Ascending aorta (tissue), 2 donors: ENCODE measurements at regions of chr2 and their contacts with region 1.

Region 1: GRCh38 chr2:30146438-30147147 is at the start of gene YPEL5:
- DNase-seq: peak; percentile 99 to 100
- H3K4me3 ChIP-seq: peak within 1 kb of the TSS; percentile 98 to 100
- H3K27ac ChIP-seq: peak within 1 kb of the TSS; percentile 97 to 100
- H3K4me1 ChIP-seq: peaks cover 5 to 22% of the 10 kb centered on the region in 2 donors
- H3K27me3 ChIP-seq: no peaks in the 10 kb centered on the region
- CTCF ChIP-seq: no peak
- total RNA-seq, gene YPEL5: 14.2 TPM

Region 2: DNA sequence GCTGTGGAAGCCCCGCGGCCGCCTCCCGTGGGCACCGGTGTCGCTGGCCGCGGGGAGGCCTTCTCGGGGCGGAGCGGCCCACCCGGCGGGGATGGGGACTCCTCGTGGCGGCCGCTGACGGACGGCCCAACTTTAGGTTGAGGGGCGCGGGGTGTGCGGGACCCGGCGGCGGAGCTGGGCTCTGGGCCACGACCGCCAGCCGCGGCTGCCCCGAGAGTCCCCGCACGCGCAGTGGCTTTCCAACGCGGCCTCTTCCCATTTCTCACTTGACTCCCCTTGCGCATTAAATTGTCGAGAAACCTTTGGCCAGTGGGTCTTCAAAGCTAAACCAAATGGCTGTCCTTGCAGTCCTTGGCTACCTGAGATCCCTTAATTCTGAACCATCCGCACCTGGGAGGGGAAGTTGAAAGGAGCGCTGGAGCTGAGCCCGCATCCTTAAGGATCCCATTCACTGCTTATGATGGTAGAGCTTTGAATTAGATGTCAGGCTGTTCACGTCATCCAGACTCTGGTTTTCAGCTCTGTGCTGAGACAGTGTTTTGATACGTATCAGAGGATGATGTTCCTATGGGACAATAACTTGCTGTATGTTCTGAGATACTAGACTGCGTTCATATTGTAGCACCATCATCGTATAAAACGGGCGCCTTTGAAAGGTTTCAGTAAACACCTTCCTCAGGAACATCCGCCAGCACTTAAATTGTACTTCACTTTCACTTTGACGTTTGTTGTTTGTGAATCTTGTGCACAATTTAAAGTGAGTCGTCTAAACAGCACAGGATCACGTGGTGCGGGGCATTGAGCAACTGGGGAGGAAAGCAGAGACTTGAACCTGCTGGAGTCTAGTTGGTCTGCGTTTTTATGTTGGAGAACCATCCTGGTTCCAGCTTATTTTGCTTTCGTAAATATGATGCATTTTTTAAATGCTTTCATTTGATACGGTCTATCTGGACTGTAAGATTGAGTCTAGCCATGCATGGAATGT is 1030.5 kb before region 1 on chr2:
- intact Hi-C with region 1: loop called (anchors 10 kb)
- DNase-seq: peak; percentile 39 to 81
- H3K4me3 ChIP-seq: peak overlapping the region; percentile 74 to 86
- H3K27ac ChIP-seq: peak overlapping the region; percentile 57 to 73
- H3K4me1 ChIP-seq: peaks cover 0 to 14% of the 10 kb centered on the region in 2 donors
- H3K27me3 ChIP-seq: no peaks in the 10 kb centered on the region
- CTCF ChIP-seq: no peak

Region 3: DNA sequence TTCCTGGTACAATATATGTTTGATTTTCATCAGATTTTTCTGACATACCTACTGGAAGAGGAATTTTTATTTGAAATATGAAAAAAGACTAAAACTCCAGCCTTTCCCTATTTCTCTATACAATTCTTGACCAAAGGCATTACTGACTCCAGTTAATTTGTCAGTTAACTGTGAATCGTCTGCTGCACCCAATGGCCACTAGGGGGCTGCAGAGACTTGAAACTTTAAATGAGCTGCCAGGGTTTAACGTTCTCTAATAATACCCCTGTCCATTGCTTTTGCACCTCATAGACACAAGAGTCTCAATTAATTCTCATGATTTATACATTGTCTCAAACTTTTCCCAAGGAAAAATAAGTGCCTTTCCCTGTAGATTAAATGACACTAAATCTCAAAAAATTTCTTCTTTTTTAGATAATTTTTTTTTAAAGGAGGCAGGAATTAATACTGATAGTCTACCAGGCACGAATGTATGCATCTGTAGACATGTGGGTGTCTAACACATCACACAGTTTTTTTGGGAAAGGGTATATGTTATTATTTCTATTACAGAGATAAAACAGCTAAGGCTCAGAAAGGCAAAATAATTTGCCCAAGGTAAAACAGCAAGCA is 223.4 kb before region 1 on chr2:
- intact Hi-C with region 1: no loop called
- DNase-seq: no peak
- H3K4me3 ChIP-seq: no peak overlapping the region
- H3K27ac ChIP-seq: no peak overlapping the region
- H3K4me1 ChIP-seq: peaks cover 13% of the 10 kb centered on the region in 2 donors
- H3K27me3 ChIP-seq: no peaks in the 10 kb centered on the region
- CTCF ChIP-seq: peak; percentile 20 to 71 (median 53)

Region 4: DNA sequence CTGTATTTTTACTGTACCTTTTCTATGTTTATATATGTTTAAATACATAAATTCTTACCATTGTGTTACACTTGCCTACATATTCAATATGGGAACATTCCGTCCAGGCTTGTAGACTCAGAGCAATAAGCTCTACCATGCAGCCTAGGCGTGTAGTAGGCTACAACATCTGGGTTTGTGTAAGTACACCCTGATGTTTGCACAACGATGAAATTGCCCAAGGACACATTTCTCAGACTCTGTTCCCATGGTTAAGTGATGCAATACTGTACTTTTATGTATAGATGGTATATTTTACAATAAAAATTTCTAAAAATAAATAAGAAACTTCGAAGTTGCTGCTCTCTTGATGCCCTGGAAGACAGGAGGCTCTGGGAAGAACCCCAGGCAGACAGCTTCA is 38.6 kb after region 1 on chr2:
- intact Hi-C with region 1: no loop called
- DNase-seq: no peak
- H3K4me3 ChIP-seq: no peak overlapping the region
- H3K27ac ChIP-seq: no peak overlapping the region
- H3K4me1 ChIP-seq: no peaks in the 10 kb centered on the region
- H3K27me3 ChIP-seq: no peaks in the 10 kb centered on the region
- CTCF ChIP-seq: no peak

Region 5: GRCh38 chr2:30979822-30980245 is 833.2 kb after region 1 on chr2:
- intact Hi-C with region 1: loop called (anchors 5 kb)
- DNase-seq: peak; percentile 88 to 93
- H3K4me3 ChIP-seq: no peak overlapping the region
- H3K27ac ChIP-seq: peak overlapping the region; percentile 70 to 83
- H3K4me1 ChIP-seq: peaks cover 4 to 11% of the 10 kb centered on the region in 2 donors
- H3K27me3 ChIP-seq: no peaks in the 10 kb centered on the region
- CTCF ChIP-seq: peak in 2 of 3 experiments; percentile 44 to 57

Region 6: DNA sequence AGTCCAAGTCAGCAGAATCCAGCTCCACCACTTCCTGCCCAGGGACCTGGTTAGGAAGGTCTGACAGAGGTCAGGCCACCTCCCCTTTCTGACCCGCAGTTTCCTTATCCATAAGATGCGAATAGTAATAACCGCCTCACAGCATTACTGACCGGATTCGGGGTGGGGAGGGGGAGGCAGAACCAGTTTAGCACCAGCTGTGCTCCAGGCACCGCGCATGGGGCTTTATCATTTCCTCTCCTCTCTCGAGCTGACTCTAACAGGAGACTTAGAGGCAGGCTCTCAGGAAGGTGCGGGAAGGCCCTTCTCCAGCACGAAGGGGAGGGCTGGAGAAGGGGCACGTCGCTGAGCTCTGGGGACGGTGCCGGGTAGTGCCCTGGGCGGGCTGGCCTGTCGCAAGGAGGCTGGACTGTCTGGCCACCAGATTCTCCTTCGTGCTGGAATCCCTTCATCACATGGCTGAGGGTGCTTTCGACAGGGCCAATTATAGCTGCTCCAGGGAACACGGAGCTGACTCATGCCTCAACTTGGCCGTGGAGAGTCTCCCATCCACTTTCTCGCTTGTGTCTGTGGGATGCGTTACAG is 1093.1 kb after region 1 on chr2:
- intact Hi-C with region 1: loop called (anchors 2 kb)
- DNase-seq: peak; percentile 60 to 92
- H3K4me3 ChIP-seq: peak overlapping the region; percentile 8 to 30
- H3K27ac ChIP-seq: peak overlapping the region; percentile 95 to 99
- H3K4me1 ChIP-seq: peaks cover 26 to 46% of the 10 kb centered on the region in 2 donors
- H3K27me3 ChIP-seq: no peaks in the 10 kb centered on the region
- CTCF ChIP-seq: no peak